Ovary (tissue), 10 donors: ENCODE measurements at regions of chr1 and their contacts with region 1.

Region 1: DNA sequence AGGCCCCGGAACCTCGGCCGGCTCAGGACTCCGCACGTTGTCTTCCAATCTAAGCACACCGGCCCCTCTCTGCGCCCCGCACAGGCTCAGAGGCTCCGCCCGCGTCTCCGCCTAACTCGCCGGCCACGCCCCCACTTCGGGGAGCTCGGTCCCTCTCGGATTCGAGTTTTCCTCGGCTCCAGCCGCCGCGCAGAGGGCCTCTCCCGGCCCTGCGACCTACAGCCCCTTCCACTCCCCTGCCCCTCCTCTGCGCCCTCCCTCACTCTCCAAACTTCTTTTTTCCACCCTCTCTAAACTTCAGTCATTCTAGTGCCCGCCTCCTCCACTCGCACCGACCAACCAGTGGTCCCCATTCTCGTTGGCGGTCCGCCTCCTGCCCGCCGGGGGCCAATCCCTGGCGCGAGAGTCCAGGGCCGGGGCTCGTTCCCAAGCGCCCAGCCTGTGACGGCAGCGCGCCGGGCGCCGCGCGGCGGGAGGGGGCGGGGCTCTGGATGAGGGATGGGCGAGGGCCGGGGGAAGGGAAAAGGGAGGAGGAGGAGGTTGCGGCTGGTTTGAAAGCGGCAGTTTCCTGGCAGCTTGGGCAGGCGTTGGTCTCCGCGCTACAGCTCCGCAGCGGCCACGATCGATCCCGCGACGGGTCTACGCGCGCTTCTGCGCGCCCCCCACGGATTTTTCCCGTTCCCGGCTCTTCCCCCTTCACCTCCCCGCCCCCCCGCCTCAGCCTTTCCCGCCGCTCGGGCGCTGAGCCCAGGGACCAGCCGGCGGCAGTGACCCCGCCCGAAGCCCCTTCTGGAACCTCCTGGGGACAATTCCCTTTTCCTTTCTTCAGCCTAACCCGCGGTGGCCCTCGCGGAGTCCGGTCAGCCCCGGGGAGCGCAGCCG is at the start of gene MAGI3:
- DNase-seq: peak; percentile 98 to 99 (median 99)
- H3K4me3 ChIP-seq: peak within 1 kb of the TSS; percentile 97
- H3K27ac ChIP-seq: peak within 1 kb of the TSS; percentile 83 to 89
- H3K4me1 ChIP-seq: peaks cover 1% of the 10 kb centered on the region
- H3K27me3 ChIP-seq: no peaks in the 10 kb centered on the region
- CTCF ChIP-seq: no peak
- EP300 ChIP-seq: no peak
- POLR2A ChIP-seq: peak; percentile 68
- total RNA-seq, gene MAGI3: 13.4 to 20.8 (median 15.8) TPM

Region 2: DNA sequence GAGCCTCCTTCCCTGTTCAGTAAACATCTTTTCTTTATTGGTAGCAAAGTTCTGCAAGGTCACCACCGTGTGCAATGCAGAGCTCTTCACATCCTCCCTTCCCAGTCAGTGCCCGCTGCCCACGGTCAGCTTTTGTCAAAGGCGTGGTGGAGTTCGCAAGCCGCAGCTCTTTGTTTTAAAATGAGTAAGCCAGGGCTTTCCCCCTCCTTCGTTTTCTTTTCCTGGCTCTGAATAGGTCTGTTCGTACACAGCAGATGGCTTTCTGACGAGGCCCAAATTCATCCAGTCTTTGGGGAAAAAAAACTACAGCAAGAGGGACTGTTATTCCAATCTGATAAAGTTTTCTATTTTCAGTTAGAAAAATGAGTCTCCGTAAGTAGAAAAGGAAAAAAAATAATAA is 164.0 kb before region 1 on chr1:
- intact Hi-C with region 1: loop called in 2 of 4 experiments (anchors 10 kb)
- DNase-seq: peak in 4 of 5 donors; percentile 22 to 55 (median 51)
- H3K4me3 ChIP-seq: no peak overlapping the region
- H3K27ac ChIP-seq: peak overlapping the region in 1 of 2 donors; percentile 69
- H3K4me1 ChIP-seq: peaks cover 4% of the 10 kb centered on the region
- H3K27me3 ChIP-seq: no peaks in the 10 kb centered on the region
- CTCF ChIP-seq: no peak
- EP300 ChIP-seq: no peak
- POLR2A ChIP-seq: no peak

Region 3: GRCh38 chr1:113369040-113369439 is 21.2 kb before region 1 on chr1:
- intact Hi-C with region 1: no loop called
- DNase-seq: no peak
- H3K4me3 ChIP-seq: no peak overlapping the region
- H3K27ac ChIP-seq: no peak overlapping the region
- H3K4me1 ChIP-seq: no peaks in the 10 kb centered on the region
- H3K27me3 ChIP-seq: no peaks in the 10 kb centered on the region
- CTCF ChIP-seq: no peak
- EP300 ChIP-seq: no peak
- POLR2A ChIP-seq: no peak